Activated B cell treated with CpG ODN at 0.5 μM for 24 hours (primary cell): ENCODE measurements at regions of chr11 and their contacts with region 1.

Region 1: DNA sequence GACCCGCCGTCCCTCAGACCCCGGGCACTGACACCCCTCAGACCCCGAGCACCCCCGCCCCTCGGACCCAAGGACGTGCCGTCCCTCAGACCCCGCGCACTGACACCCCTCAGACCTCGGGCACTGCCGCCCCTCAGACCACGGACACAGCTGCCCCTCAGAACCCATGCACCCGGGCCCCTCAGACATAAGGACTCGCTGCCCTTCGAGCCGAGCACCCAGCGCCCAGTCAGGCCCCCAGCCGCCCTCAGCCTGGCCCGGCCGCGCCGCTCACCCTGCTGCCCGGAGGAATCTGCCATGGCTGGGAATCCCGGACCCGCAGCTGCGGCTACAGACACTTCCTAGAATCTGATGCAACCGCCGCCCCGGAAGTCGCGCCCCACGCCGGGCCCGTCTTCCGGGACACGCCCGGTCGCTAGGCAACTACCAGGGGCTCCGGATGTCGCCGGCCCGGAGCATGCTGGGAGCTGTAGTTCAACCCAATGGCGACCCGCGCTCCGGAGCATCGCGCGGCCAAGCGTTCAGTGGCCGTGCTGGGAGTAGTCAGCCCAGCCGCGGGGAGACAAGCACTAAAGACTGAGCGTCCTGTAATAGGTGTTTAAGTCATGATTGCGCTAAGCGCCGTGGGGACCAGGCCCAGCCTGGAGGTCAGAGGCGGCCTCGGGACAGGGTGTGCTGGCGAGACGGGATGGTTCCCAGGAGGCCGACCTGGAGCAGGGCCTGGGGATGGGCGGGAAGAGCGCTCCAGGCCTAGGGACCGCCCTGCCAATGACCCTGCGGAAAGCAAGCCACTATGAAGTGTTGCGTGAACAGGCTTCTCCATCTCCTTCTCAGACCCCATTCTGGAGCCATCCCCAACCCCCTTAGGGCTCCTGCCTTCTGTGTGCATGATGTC is at the start of gene CARS1:
- DNase-seq: peak; percentile 88
- ATAC-seq: peak; percentile 89
- H3K4me3 Mint-ChIP-seq: peak within 1 kb of the TSS; percentile 90
- H3K27ac Mint-ChIP-seq: peak within 1 kb of the TSS; percentile 85
- H3K4me1 Mint-ChIP-seq: peaks cover 36% of the 10 kb centered on the region
- H3K27me3 Mint-ChIP-seq: no peaks in the 10 kb centered on the region
- CTCF ChIP-seq: no peak
- total RNA-seq, gene CARS1: 95.9 and 110 TPM in 2 replicates

Region 2: GRCh38 chr11:1876361-1877063 is 1180.8 kb before region 1 on chr11:
- CTCF ChIA-PET with region 1: no interaction called
- POLR2A ChIA-PET with region 1: no interaction called
- intact Hi-C with region 1: no loop called
- DNase-seq: peak; percentile 32
- ATAC-seq: no peak
- H3K4me3 Mint-ChIP-seq: no peak overlapping the region
- H3K27ac Mint-ChIP-seq: no peak overlapping the region
- H3K4me1 Mint-ChIP-seq: peaks cover 64% of the 10 kb centered on the region
- H3K27me3 Mint-ChIP-seq: no peaks in the 10 kb centered on the region
- CTCF ChIP-seq: no peak

Region 3: GRCh38 chr11:2390725-2391151 is 666.6 kb before region 1 on chr11:
- CTCF ChIA-PET with region 1: no interaction called
- POLR2A ChIA-PET with region 1: no interaction called
- intact Hi-C with region 1: loop called (anchors 5 kb)
- DNase-seq: no peak
- ATAC-seq: peak; percentile 13
- H3K4me3 Mint-ChIP-seq: peak overlapping the region; percentile 32
- H3K27ac Mint-ChIP-seq: peak overlapping the region; percentile 67
- H3K4me1 Mint-ChIP-seq: peaks cover 88% of the 10 kb centered on the region
- H3K27me3 Mint-ChIP-seq: no peaks in the 10 kb centered on the region
- CTCF ChIP-seq: no peak

Region 4: GRCh38 chr11:2901854-2902783 is 155.2 kb before region 1 on chr11:
- CTCF ChIA-PET with region 1: no interaction called
- POLR2A ChIA-PET with region 1: no interaction called
- intact Hi-C with region 1: loop called (anchors 5 kb)
- DNase-seq: peak; percentile 80
- ATAC-seq: peak; percentile 97
- H3K4me3 Mint-ChIP-seq: peak overlapping the region; percentile 80
- H3K27ac Mint-ChIP-seq: peak overlapping the region; percentile 24
- H3K4me1 Mint-ChIP-seq: peaks cover 28% of the 10 kb centered on the region
- H3K27me3 Mint-ChIP-seq: no peaks in the 10 kb centered on the region
- CTCF ChIP-seq: no peak

Region 5: DNA sequence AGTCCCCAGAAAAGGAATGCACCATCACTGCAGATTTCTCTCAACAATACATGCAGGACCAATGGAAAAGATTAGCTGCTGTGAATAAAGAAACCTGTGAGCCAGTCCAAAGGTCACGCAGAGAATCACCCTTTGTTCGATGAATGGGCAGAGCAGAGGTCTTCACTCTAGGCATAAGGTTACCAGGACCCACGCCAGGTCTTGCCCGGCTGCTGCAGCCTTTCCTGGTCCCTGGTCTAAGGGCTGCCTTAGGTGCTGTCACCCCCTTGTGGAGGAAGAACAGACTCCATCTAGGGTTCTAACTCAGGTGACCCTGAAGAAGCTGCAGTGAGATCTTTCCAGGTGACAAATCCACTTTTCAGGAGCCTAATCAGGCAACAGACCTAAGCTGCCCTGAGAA is 36.2 kb before region 1 on chr11:
- CTCF ChIA-PET with region 1: no interaction called
- POLR2A ChIA-PET with region 1: interaction called, 4 read pairs
- intact Hi-C with region 1: loop called (anchors 2 kb)
- DNase-seq: no peak
- ATAC-seq: no peak
- H3K4me3 Mint-ChIP-seq: no peak overlapping the region
- H3K27ac Mint-ChIP-seq: no peak overlapping the region
- H3K4me1 Mint-ChIP-seq: peaks cover 18% of the 10 kb centered on the region
- H3K27me3 Mint-ChIP-seq: no peaks in the 10 kb centered on the region
- CTCF ChIP-seq: no peak

Region 6: DNA sequence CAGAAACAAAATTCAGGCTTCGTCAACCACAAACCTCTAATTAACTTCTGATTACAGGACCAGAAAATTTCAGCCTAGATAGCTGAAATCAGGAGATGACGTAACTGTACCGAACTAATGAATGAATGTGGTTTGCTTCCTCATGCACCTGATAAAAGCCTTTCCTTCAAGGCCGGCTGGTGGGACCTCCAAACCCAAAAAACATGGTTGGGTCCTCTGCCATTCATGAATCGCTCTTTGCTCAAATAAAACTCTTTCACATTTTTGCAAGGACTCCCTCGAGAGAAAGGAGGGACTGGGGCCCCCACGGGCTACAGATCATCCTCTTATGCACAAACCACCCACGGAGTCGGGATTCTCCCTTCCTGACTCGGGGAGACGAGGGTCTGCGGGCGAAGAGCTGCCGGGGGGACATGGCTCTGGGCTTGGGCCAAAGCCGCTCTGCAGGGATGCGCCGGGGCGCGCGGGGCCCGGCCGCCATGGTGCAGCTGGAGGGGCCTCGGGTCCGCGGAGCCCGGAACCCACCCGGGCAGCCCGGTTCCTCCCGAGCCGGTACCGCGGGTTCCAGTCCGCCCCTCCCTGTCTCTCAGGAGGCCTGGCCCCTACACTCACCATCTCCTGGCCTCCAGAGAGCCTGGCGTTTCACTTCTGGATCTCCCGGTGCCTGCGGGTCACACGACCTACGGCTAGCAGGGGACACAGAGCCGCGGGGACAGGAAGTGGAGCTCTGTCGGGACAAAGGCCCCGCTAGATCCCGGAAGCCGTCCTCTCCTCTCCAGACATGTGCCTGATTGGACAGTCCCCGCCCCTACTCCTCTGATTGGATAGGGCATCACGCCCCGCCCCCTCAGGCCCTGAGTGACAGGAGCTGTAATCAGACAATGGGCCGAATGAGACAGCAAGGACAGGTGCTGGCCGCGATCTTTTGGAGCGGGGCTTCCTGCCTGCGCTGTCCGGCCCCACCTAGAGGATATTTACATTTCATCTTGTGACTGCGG is 321.4 kb after region 1 on chr11 and contains the start of gene ZNF195:
- CTCF ChIA-PET with region 1: no interaction called
- POLR2A ChIA-PET with region 1: interaction called, 4 read pairs
- intact Hi-C with region 1: loop called (anchors 1 kb)
- DNase-seq: peak; percentile 95
- ATAC-seq: peak; percentile 99
- H3K4me3 Mint-ChIP-seq: peak within 1 kb of the TSS; percentile 99
- H3K27ac Mint-ChIP-seq: peak within 1 kb of the TSS; percentile 96
- H3K4me1 Mint-ChIP-seq: peaks cover 45% of the 10 kb centered on the region
- H3K27me3 Mint-ChIP-seq: no peaks in the 10 kb centered on the region
- CTCF ChIP-seq: no peak
- total RNA-seq, gene ZNF195: 48.3 and 54.8 TPM in 2 replicates

Region 7: DNA sequence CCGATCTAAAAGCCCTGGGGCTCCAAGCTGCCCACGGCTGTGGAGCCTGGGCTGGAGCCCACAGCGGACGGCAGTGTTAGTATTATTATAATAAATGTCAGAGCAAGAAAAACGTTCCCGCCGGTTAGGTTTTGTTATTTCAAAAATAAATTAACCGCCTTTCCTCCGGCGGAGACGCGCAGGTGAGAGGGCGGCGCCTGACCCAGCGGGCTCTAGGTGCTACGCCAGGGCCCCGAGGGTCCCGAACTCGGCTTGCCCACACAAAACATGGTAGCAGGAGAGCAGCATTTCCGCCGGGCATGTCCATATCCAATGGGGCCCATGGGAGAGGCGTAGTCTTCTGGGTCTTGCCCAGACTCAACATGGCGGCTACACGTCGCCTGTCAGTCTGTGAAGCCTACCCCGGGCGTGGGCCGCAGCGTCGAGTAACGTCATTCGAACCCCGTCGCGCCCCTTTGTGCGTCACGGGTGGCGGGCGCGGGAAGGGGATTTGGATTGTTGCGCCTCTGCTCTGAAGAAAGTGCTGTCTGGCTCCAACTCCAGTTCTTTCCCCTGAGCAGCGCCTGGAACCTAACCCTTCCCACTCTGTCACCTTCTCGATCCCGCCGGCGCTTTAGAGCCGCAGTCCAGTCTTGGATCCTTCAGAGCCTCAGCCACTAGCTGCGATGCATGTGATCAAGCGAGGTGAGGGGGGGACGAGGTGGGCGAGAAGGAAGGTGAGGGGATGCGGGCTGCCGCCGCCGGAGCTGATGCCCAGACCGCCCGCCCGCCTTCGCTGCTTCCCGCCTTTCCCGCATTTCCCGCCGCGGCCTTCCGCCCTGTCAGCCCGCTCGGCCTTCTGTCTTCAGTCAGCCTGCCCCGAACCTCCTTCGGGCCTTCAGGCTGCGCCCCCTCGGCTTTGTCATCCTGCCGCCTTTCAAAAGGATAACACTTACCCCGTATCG is 1037.3 kb after region 1 on chr11 and contains the start of gene RRM1:
- CTCF ChIA-PET with region 1: no interaction called
- POLR2A ChIA-PET with region 1: no interaction called
- intact Hi-C with region 1: loop called (anchors 10 kb)
- DNase-seq: peak; percentile 89
- ATAC-seq: peak; percentile 98
- H3K4me3 Mint-ChIP-seq: peak within 1 kb of the TSS; percentile 96
- H3K27ac Mint-ChIP-seq: peak within 1 kb of the TSS; percentile 95
- H3K4me1 Mint-ChIP-seq: peaks cover 36% of the 10 kb centered on the region
- H3K27me3 Mint-ChIP-seq: no peaks in the 10 kb centered on the region
- CTCF ChIP-seq: no peak
- total RNA-seq, gene RRM1: 34.6 and 39.6 TPM in 2 replicates